WTC11 (cell line): ENCODE measurements at regions of chr11 and their contacts with region 1.

Region 1: DNA sequence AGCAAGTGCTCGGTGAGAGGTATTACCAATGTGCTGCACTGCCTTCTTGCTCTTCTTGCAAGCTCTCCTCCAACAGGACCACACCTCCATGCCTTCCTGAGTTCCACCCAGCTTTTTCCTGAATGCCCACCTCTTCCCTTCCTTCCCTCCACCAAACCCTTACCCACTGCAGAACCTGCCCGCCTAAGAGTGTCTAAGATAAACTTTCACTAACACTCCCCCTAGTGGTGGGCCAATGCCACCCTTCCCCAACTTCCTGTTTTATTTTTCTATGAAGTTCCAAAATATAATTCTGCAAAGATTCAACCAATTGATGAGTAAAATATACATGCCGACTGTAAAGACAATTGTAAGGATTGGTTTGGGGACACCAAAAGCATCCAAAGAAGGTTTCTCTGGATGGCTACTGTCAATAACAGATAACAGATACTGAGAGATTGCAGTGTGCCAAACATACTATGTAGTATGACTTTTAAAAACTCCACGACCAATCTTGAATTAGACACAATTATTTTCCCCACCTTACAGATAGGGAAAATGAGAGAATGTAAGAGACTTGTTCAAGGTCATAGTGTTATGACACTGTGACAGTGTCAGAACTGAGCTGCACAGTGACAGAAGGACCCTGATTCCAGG is 38.6 kb upstream of the BMAL1 start:
- DNase-seq: peak; percentile 52
- ATAC-seq: peak; percentile 98
- H3K4me3 Mint-ChIP-seq: no peak overlapping the region
- H3K27ac Mint-ChIP-seq: no peak overlapping the region
- H3K4me1 Mint-ChIP-seq: peaks cover 4% of the 10 kb centered on the region
- H3K27me3 Mint-ChIP-seq: peaks cover 3% of the 10 kb centered on the region; the same call in 1 of the 2 replicates
- CTCF ChIP-seq: peak; percentile 83

Region 2: GRCh38 chr11:12508151-12508751 is 730.7 kb before region 1 on chr11:
- CTCF ChIA-PET with region 1: no interaction called
- POLR2A ChIA-PET with region 1: no interaction called
- DNase-seq: no peak
- ATAC-seq: no peak
- H3K4me3 Mint-ChIP-seq: no peak overlapping the region
- H3K27ac Mint-ChIP-seq: 0 out of 2 replicates have a peak overlapping the region, but pooled peaks have one; percentile 87
- H3K4me1 Mint-ChIP-seq: peaks cover 24% of the 10 kb centered on the region
- H3K27me3 Mint-ChIP-seq: no peaks in the 10 kb centered on the region
- CTCF ChIP-seq: no peak

Region 3: GRCh38 chr11:13225038-13226001 is 13.7 kb before region 1 on chr11:
- CTCF ChIA-PET with region 1: interaction called, 10 read pairs
- POLR2A ChIA-PET with region 1: no interaction called
- DNase-seq: no peak
- ATAC-seq: no peak
- H3K4me3 Mint-ChIP-seq: no peak overlapping the region
- H3K27ac Mint-ChIP-seq: no peak overlapping the region
- H3K4me1 Mint-ChIP-seq: no peaks in the 10 kb centered on the region
- H3K27me3 Mint-ChIP-seq: no peaks in the 10 kb centered on the region
- CTCF ChIP-seq: no peak

Region 4: GRCh38 chr11:13256216-13256615 is 17.2 kb after region 1 on chr11:
- CTCF ChIA-PET with region 1: interaction called, 10 read pairs
- POLR2A ChIA-PET with region 1: no interaction called
- DNase-seq: no peak
- ATAC-seq: no peak
- H3K4me3 Mint-ChIP-seq: no peak overlapping the region
- H3K27ac Mint-ChIP-seq: no peak overlapping the region
- H3K4me1 Mint-ChIP-seq: peaks cover 30% of the 10 kb centered on the region
- H3K27me3 Mint-ChIP-seq: no peaks in the 10 kb centered on the region; the same call in 1 of the 2 replicates
- CTCF ChIP-seq: no peak